Cardiac septum (tissue), 1 donor: ENCODE measurements at regions of chr1 and their contacts with region 1.

Region 1: GRCh38 chr1:27392096-27392777 is at the start of gene GPR3:
- DNase-seq: peak; percentile 94
- total RNA-seq, gene GPR3: 2.3 TPM

Region 2: DNA sequence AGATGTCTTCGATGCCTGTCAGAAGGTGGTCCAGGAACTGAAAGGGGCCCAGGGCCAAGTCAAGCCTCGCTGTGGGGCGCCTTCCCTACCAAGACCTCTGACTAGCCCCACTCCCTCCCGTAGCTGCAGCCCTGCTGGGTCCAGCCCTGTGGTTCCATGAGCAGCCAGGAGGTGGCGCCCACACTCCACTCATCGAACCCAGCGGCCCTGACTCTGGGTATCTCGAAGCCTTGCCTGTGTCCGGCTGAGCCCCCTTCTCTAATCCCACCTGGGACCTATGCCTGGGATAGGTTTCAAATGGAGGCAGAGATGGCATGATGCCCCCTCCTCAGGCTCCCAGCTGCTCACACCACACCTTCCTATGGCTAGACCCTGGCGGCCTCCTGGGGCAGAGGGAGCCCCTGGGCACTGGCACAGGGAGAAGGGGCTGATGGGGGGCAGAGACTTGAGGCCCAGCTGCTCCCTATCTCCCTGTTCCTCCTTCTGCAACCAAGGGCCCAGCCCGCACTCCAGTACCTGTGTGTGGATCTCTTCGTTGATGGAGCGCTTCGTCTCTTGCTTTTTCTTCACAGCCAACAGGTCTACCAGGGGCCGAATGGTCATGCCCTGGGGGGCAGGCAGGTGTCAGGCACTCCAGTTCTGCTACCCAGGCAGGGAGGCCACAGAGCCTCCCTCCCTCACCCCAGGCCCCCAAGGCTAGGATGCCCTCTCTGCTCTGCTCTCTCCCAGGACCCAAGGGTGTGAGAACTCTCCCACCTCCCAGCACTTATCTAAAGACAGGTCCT is 289.3 kb before region 1 on chr1:
- intact Hi-C with region 1: loop called (anchors 5 kb)
- DNase-seq: peak; percentile 91

Region 3: GRCh38 chr1:27300341-27301051 is 91.7 kb before region 1 on chr1:
- intact Hi-C with region 1: loop called (anchors 2 kb)
- DNase-seq: peak; percentile 92

Region 4: DNA sequence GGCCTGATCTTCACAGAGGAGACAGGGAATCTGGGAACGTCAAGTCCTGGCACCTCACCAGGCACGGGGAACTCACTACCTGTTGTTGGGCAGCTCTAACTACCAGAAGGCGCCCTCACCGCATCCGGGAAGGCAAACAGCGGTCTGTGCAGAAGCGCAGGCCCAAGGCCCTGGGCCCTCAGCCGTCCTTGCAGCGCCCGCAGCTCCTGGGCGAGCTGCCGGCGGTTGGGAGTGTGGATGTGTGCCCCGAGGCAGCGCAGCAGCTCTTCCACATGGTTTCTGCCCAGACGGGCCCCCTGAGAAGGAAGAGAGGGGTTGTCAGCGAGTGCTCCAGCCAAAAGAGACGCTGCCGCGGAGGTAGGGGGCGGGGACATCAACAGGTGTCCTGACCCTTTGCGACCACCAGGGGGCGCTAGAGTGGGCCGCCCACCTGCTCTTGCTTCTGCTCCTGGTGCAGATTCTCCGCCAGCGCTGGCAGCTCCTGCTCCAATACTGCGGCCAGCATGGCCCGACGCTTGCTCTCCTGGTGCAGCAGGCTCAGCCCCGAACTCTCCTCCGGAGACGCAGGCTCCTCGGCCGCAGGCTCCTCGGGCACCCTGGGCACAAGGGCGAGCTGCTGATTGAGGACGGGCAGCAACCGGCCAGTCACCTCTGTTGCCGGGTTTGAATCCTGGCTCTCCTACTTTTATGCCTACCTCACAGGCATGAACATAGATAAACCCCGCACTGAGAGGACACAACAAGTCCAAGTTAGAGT is 34.8 kb before region 1 on chr1:
- intact Hi-C with region 1: loop called (anchors 5 kb)
- DNase-seq: peak; percentile 92

Region 5: DNA sequence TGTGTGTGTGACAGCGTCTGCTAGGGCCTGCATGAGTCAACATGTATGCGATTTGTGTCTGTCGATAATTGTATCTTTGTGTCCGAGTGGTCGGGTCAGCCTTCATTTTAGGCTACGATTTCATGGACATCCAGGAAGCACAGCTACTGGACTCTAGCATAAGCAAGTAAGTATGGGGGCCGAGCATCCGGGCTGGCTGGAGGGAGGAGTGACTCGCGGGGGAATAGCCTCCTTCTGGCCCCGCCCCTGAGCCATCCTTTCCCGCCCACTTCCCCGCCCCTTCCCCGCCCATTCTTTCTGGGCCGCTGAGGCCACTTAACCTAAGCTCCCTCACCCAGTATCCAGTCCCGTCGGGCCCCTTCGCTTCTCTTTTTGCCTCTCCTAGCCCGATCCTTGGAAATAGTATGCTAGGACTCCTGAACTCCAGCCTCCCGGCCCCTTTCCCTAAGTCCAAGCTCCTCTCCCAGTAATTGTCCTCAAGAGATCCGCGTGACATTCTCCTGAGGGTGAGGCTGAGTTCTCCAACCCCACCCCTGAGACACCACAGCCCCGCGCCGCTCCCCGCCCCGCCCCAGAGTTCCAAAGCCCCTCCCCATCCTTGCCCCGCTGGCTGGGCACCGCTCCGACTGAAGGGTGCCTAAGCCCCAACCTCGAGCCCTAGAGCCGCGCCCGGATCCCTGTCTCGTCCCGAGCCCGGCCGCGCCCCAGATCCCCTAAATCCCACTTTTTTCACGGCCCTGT is 26.7 kb before region 1 on chr1:
- intact Hi-C with region 1: loop called (anchors 2 kb)
- DNase-seq: peak; percentile 97

Region 6: DNA sequence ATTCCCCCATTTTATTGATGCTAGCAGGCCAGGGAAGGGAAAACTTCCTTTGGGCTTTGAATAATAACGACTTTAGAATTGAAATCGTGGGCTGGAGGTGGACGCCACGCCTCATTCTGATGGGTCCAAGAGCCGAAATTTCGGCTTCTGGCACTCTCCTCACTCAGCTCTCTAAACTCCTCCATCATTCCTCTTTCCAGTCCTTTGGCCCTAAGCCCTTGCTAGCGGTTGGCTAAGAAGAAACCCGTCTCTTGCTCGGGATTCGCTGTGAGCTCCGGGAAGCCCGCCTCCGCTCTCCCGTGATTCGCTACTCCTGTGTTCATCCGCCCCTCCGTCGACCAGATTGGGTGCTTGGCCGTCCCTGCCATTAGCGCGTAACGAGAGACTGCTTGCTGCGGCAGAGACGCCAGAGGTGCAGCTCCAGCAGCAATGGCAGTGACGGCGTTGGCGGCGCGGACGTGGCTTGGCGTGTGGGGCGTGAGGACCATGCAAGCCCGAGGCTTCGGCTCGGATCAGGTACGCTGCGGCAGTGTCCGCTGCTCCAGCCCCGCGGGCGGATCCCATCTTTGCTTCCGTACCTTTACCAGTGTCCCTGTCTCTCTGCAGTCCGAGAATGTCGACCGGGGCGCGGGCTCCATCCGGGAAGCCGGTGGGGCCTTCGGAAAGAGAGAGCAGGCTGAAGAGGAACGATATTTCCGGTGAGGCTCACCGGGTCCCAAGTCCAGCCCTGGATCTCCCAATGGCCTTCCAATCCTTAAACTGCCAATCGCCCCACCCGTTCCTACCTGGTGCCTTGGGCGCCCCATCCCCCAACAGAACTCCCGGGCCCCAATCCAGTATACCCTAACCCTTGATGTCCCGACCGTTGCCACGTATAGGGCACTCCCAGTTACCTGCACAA is 843.8 kb after region 1 on chr1 and contains the start of gene ATP5IF1:
- intact Hi-C with region 1: no loop called
- DNase-seq: peak; percentile 99
- total RNA-seq, gene ATP5IF1: 423 TPM